ENCODE measurements at regions of chr10 and their contacts with region 1.

Region 1: DNA sequence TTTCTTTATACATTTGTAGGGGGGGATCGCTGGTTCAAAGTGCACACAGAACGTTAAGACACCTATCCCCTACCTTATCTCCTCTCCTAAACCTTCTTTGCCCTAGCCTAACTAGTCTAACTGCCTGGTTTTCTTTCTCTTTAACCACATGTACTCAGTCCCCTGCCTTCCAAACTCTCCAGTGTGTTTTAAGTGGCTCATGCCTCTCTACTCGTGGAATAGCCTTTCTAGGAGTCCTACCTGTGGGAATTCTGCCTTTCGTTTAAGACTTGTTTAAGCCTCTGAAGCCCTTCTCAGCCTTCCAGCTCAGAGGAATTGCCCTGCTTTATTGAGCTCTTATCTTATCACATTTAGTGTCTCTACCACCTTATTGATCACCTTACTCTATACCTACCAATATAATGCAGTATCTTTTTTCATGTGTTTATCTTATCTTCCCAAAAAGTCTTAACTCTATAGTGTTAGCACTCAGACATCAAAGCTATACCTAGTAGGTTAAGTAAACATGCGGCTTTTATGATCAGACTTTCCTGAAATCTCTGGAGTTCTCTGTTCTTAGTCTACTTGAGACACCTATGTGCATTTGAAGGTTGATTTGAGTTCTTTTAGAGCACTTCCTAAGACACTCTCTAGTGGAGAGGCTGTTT is 50.7 kb downstream of the ARID5B start:
- DNase-seq: peak; percentile 87 to 89
- H3K4me3 ChIP-seq: no peak overlapping the region
- H3K4me3 Mint-ChIP-seq: peak overlapping the region; percentile 60
- H3K27ac Mint-ChIP-seq: peak overlapping the region; percentile 67
- H3K4me1 ChIP-seq: peaks cover 54% of the 10 kb centered on the region
- H3K4me1 Mint-ChIP-seq: peaks cover 47% of the 10 kb centered on the region
- H3K27me3 ChIP-seq: no peaks in the 10 kb centered on the region
- H3K27me3 Mint-ChIP-seq: no peaks in the 10 kb centered on the region
- CTCF ChIP-seq: no peak

Region 2: GRCh38 chr10:61896854-61897661 is 55.1 kb before region 1 on chr10:
- CTCF ChIA-PET with region 1: interaction called, 9 read pairs
- POLR2A ChIA-PET with region 1: interaction called, 10 read pairs
- intact Hi-C with region 1: no loop called
- DNase-seq: peak; percentile 78 to 83
- H3K4me3 ChIP-seq: no peak overlapping the region
- H3K4me3 Mint-ChIP-seq: no peak overlapping the region
- H3K27ac Mint-ChIP-seq: peak overlapping the region; percentile 99
- H3K4me1 ChIP-seq: peaks cover 42% of the 10 kb centered on the region
- H3K4me1 Mint-ChIP-seq: peaks cover 32% of the 10 kb centered on the region
- H3K27me3 ChIP-seq: no peaks in the 10 kb centered on the region
- H3K27me3 Mint-ChIP-seq: no peaks in the 10 kb centered on the region
- CTCF ChIP-seq: peak; percentile 71 to 88

Region 3: GRCh38 chr10:61964059-61964709 is 12.0 kb after region 1 on chr10:
- CTCF ChIA-PET with region 1: interaction called, 6 read pairs
- POLR2A ChIA-PET with region 1: no interaction called
- intact Hi-C with region 1: loop called (anchors 1 kb)
- DNase-seq: peak; percentile 53 to 57
- H3K4me3 ChIP-seq: no peak overlapping the region
- H3K4me3 Mint-ChIP-seq: peak overlapping the region; percentile 51
- H3K27ac Mint-ChIP-seq: peak overlapping the region; percentile 84
- H3K4me1 ChIP-seq: peaks cover 78% of the 10 kb centered on the region
- H3K4me1 Mint-ChIP-seq: peaks cover 75% of the 10 kb centered on the region
- H3K27me3 ChIP-seq: no peaks in the 10 kb centered on the region
- H3K27me3 Mint-ChIP-seq: no peaks in the 10 kb centered on the region
- CTCF ChIP-seq: no peak

Region 4: GRCh38 chr10:62025901-62026879 is 74.0 kb after region 1 on chr10:
- CTCF ChIA-PET with region 1: interaction called, 7 read pairs
- POLR2A ChIA-PET with region 1: interaction called, 3 read pairs
- intact Hi-C with region 1: loop called (anchors 1 kb)
- DNase-seq: no peak
- H3K4me3 ChIP-seq: no peak overlapping the region
- H3K4me3 Mint-ChIP-seq: no peak overlapping the region
- H3K27ac Mint-ChIP-seq: peak overlapping the region; percentile 82
- H3K4me1 ChIP-seq: peaks cover 91% of the 10 kb centered on the region
- H3K4me1 Mint-ChIP-seq: peaks cover 90% of the 10 kb centered on the region
- H3K27me3 ChIP-seq: no peaks in the 10 kb centered on the region
- H3K27me3 Mint-ChIP-seq: no peaks in the 10 kb centered on the region
- CTCF ChIP-seq: no peak

Region 5: DNA sequence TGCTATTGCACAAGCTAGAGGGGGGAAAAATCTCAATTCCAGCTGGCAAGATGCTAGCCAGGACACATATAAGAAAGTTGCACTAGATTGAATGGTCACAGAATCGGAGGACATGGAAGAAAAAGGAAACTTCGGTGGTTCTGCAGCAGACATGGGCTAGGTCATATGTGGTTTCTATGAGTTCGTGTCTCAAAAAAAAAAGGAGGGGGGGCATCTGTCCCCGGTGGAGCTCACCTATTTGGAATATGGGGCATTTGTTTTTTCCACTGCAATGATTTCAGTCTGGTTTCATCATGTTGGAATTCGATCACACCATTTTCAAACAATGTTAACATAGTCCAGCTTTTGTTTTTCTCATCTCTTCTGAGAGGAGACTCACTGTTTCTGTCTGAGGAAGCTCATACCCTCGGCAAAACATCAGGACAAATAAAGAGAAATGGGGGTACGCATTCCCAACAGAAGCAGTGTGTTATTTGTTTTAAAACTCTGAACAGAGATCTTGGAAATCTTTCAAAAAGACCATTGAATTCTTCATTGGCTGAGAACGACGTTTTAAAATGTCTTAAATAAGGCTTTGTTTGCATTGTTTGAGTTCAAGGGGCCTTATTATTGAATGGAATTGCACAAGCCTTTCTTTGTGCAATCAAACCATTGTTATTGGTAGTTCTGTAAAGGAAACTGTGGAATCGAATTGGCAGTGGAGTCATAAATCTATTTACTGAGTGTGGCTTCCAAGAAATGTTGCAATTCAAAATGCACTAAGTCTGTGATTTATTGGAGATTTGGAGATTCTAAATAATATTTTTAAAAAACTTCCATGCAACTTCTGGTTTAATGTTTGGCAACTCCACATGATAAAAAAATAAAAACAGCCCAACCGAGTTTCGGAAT is 143.3 kb after region 1 on chr10:
- CTCF ChIA-PET with region 1: no interaction called
- POLR2A ChIA-PET with region 1: no interaction called
- intact Hi-C with region 1: loop called (anchors 1 kb)
- DNase-seq: peak in 1 of 2 experiments; percentile 82
- H3K4me3 ChIP-seq: no peak overlapping the region
- H3K4me3 Mint-ChIP-seq: peak overlapping the region; percentile 35
- H3K27ac Mint-ChIP-seq: peak overlapping the region; percentile 88
- H3K4me1 ChIP-seq: peaks cover 84% of the 10 kb centered on the region
- H3K4me1 Mint-ChIP-seq: peaks cover 70% of the 10 kb centered on the region
- H3K27me3 ChIP-seq: no peaks in the 10 kb centered on the region
- H3K27me3 Mint-ChIP-seq: no peaks in the 10 kb centered on the region
- CTCF ChIP-seq: no peak